IMR-90 (cell line): ENCODE measurements at regions of chr12 and their contacts with region 1.

Region 1: DNA sequence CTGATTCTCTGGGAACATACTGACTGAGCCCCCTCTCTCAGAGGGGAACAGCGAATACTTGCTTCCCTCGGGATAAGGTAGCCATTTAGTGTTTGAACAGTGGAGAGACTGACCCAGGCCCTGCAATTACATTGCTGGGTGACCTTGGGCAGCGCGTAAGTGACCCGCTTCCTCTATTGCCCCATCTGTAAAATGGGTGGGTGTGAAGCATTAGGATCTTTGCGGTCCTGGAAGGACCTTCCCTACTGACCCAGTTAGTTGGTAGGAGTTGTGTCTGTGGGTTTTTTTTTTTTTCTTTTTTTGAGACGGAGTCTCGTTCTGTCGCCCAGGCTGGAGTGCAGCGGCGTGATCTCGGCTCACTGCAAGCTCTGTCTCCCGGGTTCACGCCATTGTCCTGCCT is 1.2 kb upstream of the KMT5A start:
- DNase-seq: no peak
- ATAC-seq: no peak
- H3K4me3 ChIP-seq: no peak overlapping the region
- H3K27ac ChIP-seq: no peak overlapping the region
- H3K4me1 ChIP-seq: peaks cover 2% of the 10 kb centered on the region; the same call in 1 of the 2 replicates
- H3K27me3 ChIP-seq: no peaks in the 10 kb centered on the region
- CTCF ChIP-seq: no peak
- POLR2A ChIP-seq: no peak
- RAD21 ChIP-seq: no peak

Region 2: GRCh38 chr12:123106628-123107359 is 275.9 kb before region 1 on chr12:
- CTCF ChIA-PET with region 1: no interaction called
- POLR2A ChIA-PET with region 1: no interaction called
- dilution Hi-C with region 1: no loop called
- in situ Hi-C with region 1: no loop called
- intact Hi-C with region 1: no loop called
- DNase-seq: no peak
- ATAC-seq: no peak
- H3K4me3 ChIP-seq: no peak overlapping the region
- H3K27ac ChIP-seq: no peak overlapping the region
- H3K4me1 ChIP-seq: peaks cover 7% of the 10 kb centered on the region
- H3K27me3 ChIP-seq: no peaks in the 10 kb centered on the region
- CTCF ChIP-seq: no peak
- POLR2A ChIP-seq: no peak
- RAD21 ChIP-seq: no peak

Region 3: GRCh38 chr12:123365025-123365917 is 17.4 kb before region 1 on chr12:
- CTCF ChIA-PET with region 1: interaction called, 5 read pairs
- POLR2A ChIA-PET with region 1: interaction called, 4 read pairs
- dilution Hi-C with region 1: no loop called
- in situ Hi-C with region 1: no loop called
- intact Hi-C with region 1: loop called (anchors 1 kb)
- DNase-seq: peak; percentile 98
- ATAC-seq: peak; percentile 79
- H3K4me3 ChIP-seq: peak overlapping the region; percentile 84
- H3K27ac ChIP-seq: peak overlapping the region; percentile 100
- H3K4me1 ChIP-seq: no peaks in the 10 kb centered on the region
- H3K27me3 ChIP-seq: no peaks in the 10 kb centered on the region
- CTCF ChIP-seq: peak; percentile 80
- POLR2A ChIP-seq: peak; percentile 45
- RAD21 ChIP-seq: peak; percentile 55